ENCODE measurements at regions of chr11 and their contacts with region 1.

Region 1: DNA sequence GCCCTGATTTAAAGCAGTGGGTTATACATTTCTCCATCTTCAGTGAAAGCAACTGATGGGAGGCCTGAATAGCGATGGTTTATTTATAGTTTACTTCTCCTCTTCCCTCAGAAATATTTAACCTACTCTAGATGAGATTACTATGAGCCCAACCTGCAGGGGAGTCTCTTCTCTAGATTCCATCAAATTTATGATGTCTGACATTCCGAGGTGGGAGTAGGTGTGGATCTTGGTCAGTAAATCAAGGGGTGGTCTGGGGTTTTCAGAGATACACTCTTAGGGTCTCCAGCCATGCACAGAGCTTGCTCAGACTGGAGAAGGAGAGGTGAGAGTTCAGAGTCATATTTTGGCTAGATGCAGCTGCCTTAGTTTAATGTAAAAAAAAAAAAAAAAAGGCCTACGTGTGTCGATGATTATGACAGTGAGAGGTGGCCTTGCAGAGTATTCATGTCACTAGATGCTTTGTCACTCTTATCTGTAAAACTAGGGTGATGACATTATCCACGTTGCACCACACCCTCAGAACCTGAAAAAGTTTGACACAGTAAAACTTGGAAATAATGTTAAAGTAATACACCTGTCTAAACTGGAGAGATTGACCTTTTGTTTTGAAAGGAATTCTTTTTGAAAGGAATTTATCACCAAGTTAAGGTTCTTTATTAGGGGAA is 81.2 kb downstream of the EXT2 start:
- DNase-seq: no peak
- H3K4me3 ChIP-seq: no peak overlapping the region
- H3K27ac ChIP-seq: peak overlapping the region; percentile 78
- H3K4me1 ChIP-seq: peaks cover 49% of the 10 kb centered on the region
- H3K27me3 ChIP-seq: no peaks in the 10 kb centered on the region
- CTCF ChIP-seq: no peak

Region 2: DNA sequence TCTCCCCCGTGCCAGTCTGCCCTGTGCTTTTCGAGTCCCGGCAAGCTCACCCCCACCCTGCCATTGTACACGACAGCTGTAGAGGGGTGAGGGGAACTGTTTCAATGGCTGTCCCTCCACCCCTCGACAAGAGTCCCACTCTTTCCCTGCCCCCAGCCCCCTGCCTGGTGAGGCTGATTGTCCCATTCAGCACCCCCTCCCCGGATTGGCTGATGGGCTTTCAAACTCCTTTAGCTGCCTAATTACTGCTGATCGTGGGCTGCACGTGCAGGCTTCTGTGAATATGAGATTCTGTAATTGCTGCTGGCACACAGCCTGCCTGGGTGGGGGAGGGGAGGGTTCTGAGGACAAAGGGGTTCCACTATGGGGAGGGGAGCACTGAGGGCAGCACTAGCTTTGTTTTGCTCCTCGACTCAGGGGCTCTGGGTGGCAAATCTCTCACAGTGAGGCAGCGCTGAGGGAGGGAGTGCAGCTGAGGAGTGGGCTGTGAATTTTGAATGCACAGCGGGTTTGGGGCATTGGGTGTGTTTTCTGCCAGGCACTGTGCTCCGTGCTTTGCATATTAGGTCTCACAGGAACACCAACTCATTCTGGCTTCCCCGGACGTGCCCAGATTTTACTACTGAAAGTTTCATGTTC is 171.5 kb before region 1 on chr11:
- CTCF ChIA-PET with region 1: no interaction called
- POLR2A ChIA-PET with region 1: no interaction called
- intact Hi-C with region 1: no loop called
- DNase-seq: peak; percentile 68
- H3K4me3 ChIP-seq: no peak overlapping the region
- H3K27ac ChIP-seq: no peak overlapping the region
- H3K4me1 ChIP-seq: peaks cover 15% of the 10 kb centered on the region
- H3K27me3 ChIP-seq: no peaks in the 10 kb centered on the region
- CTCF ChIP-seq: no peak

Region 3: DNA sequence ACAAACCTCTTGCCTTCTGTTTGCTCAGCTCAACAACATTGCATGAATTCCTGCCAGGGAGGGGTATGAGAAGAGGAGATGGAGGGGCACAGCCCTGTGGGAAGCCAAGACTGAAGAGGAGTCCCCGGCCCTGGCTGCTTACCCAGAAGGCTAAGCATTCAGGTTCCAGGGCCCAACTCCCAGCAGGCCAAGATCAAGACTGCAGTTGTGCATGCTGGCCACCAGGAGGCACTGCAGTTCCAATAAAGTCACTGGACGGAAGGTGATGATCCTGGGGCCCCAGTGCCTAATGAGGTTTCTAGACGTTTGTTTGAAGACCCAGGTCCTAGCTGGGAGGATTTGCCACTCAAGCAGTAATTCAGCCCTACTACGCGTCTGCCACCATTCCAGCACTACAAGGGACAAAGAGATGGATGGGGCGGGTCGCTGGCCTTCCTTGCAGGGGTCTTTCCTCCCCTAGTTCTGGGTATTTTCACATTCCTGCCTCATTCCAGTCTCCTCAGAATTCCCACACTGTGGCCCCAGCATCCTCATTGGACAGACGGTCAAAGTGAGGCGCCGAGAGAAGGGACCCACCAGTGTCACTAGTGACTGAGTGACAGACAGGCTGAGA is 109.7 kb after region 1 on chr11:
- CTCF ChIA-PET with region 1: no interaction called
- POLR2A ChIA-PET with region 1: no interaction called
- intact Hi-C with region 1: no loop called
- DNase-seq: peak; percentile 91
- H3K4me3 ChIP-seq: no peak overlapping the region
- H3K27ac ChIP-seq: peak overlapping the region; percentile 53
- H3K4me1 ChIP-seq: peaks cover 51% of the 10 kb centered on the region
- H3K27me3 ChIP-seq: no peaks in the 10 kb centered on the region
- CTCF ChIP-seq: peak; percentile 100

Region 4: GRCh38 chr11:44524751-44525201 is 348.1 kb after region 1 on chr11:
- CTCF ChIA-PET with region 1: no interaction called
- POLR2A ChIA-PET with region 1: interaction called, 11 read pairs
- intact Hi-C with region 1: no loop called
- DNase-seq: peak; percentile 44
- H3K4me3 ChIP-seq: no peak overlapping the region
- H3K27ac ChIP-seq: no peak overlapping the region
- H3K4me1 ChIP-seq: peaks cover 17% of the 10 kb centered on the region
- H3K27me3 ChIP-seq: no peaks in the 10 kb centered on the region
- CTCF ChIP-seq: no peak

Measured in A673 (cell line).